ENCODE measurements at regions of chr3 and their contacts with region 1.

Region 1: DNA sequence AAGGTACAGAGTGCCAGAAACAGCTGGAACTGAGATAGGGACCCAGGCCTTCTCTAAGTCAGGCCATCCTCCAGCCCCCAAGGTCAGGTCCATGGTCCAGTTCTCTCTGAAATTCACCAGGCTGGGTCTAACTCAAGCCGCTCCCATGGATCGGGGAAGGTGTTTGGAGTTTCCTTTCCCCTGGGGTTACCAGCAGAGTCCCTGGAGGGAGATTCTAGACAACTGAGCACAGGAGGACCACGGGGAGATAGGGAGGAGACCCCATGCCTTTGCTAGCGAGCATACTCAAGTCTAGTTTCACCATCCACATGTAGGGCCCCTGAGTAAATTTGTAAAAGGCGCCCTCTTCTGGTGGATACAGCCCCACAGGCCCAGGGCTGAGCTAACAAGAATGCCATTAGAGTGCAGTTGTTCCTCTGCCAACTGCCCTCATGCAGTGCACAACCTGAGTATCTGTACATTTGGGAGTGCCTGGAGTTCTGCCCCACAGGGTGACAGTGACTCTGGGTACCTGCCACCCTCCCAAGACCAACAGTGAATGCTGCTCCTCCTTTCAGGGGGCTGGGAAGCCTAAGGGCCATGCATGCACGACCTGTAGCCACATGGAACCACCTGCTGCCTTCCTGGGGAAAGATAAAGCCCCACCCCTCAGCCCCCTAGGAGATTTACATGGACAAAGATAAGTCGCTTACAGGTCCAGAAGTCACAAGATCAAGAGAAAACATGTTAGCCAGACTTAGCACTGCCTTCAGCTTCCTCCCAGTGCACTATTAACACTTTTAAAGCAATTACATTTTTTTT is 89.0 kb downstream of the IQSEC1 start:
- DNase-seq: peak; percentile 80
- ATAC-seq: peak; percentile 89
- H3K4me3 Mint-ChIP-seq: no peak overlapping the region
- H3K27ac Mint-ChIP-seq: peak overlapping the region; percentile 60
- H3K4me1 Mint-ChIP-seq: peaks cover 37% of the 10 kb centered on the region
- H3K27me3 Mint-ChIP-seq: no peaks in the 10 kb centered on the region; the same call in 1 of the 2 replicates
- CTCF ChIP-seq: peak; percentile 62

Region 2: DNA sequence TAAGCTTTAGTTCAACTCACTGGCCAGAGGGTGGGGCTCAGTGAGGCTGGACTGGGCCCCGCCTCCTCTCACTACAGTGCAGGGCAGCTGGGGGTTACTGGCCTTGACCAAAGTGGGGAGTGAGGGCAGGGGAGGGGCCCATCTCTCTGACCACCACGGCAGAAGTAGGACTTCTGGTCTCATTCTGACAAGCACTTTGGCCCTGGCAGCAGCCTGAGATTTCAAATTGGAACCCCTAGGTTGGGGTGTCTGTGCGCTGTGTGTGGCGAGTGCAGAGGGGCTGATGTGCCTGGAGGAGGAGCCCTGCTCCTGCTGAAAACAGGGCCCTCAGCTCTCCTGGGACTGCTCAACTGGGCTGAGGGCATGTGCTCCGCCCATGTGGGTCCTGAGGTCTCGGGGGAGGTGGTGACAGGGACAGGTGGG is 82.6 kb before region 1 on chr3:
- CTCF ChIA-PET with region 1: interaction called, 10 read pairs
- POLR2A ChIA-PET with region 1: no interaction called
- DNase-seq: no peak
- ATAC-seq: peak; percentile 84
- H3K4me3 Mint-ChIP-seq: no peak overlapping the region
- H3K27ac Mint-ChIP-seq: no peak overlapping the region
- H3K4me1 Mint-ChIP-seq: peaks cover 10% of the 10 kb centered on the region
- H3K27me3 Mint-ChIP-seq: no peaks in the 10 kb centered on the region
- CTCF ChIP-seq: no peak

Region 3: DNA sequence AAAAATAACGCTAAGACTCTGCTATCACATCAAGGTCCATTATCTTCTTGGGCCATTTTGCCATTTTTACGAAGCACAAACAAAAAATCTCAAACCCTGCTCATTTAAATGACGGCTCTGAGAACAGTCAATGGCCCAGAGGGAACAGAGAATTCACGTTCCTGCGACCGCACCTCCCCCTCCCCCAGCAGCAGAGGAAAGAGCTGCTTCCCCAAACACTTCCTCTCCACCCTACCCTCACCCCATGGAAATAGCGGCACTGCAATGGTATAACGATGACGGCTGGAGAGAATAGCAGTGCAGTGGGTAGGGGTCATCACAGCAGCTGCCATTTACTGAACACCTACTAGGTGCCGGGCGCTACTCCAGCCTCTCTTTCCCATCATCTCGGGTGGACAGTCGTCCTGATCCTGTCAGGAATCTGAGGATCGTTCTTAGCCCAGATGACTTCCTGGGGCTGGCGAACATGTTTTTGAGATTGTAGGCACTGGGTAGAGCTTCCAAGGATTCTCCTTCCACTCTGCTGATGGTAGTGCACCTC is 24.3 kb before region 1 on chr3:
- CTCF ChIA-PET with region 1: interaction called, 14 read pairs
- POLR2A ChIA-PET with region 1: interaction called, 3 read pairs
- DNase-seq: no peak
- ATAC-seq: peak; percentile 66
- H3K4me3 Mint-ChIP-seq: no peak overlapping the region
- H3K27ac Mint-ChIP-seq: 0 out of 2 replicates have a peak overlapping the region, but pooled peaks have one; percentile 22
- H3K4me1 Mint-ChIP-seq: peaks cover 23% of the 10 kb centered on the region
- H3K27me3 Mint-ChIP-seq: no peaks in the 10 kb centered on the region
- CTCF ChIP-seq: no peak

Region 4: DNA sequence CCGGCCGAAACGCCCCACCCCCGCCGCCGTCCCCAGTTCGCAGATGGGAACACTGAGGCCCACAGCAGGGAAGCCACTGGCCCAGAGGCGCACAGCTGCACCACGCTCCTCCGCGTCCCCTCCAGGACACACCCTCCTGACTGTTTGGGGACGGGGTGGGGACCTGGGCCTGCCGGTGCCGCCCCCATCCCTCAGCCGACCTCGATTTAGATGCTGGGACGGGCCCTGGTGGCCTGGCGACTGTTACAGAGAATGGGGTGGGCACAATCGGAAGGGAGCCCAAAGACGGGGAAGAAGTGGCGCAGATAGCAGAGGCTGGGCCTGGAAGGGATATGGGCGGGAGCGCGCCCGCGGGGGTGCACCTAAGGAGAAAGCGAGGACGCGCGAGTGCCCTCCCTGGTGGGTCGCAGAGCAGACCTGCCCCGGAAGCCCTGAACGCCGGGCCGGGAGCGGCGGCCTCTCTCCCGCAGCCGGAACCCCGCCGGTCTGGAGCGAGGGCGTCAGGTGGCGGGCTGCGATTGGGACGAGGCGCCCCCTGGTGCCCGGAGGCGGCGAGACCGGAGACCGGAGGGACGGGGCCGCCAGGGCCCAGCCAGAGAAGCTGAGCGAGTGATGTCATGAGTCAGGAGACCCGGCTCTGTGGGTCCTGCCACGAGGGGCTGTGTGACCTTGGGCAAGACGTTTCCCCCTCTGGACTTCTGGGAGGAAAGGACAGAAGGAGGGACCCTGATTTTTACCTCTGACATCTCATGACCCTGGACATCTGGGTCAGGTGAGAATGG is 10.6 kb after region 1 on chr3:
- CTCF ChIA-PET with region 1: interaction called, 76 read pairs
- POLR2A ChIA-PET with region 1: no interaction called
- DNase-seq: peak; percentile 90
- ATAC-seq: peak; percentile 71
- H3K4me3 Mint-ChIP-seq: peak overlapping the region; percentile 79
- H3K27ac Mint-ChIP-seq: peak overlapping the region; percentile 79
- H3K4me1 Mint-ChIP-seq: peaks cover 14% of the 10 kb centered on the region
- H3K27me3 Mint-ChIP-seq: peaks cover 6% of the 10 kb centered on the region
- CTCF ChIP-seq: peak; percentile 83

Region 5: DNA sequence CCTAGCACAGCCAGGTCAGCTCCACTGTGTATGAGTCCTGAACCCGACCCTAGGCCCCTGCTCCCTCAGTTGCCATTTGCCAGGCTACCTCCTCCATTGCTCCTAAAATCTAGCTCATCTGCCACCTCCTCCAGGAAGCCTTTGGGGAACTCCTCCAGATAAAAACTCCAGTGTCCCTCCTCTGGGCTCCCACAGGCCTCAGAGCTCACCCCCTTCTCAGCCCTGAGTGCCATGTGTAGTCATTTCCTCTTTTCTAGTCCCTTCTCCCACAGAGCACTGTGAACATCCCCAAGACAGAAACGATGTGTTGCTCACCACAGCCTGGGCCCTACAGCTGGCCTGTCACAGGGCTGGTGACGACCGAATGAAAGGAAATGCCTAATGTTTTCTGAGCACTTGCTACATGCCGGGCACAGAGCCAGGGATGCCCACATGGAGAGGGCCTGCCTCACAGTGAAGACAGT is 28.0 kb after region 1 on chr3:
- CTCF ChIA-PET with region 1: interaction called, 15 read pairs
- POLR2A ChIA-PET with region 1: no interaction called
- DNase-seq: no peak
- ATAC-seq: no peak
- H3K4me3 Mint-ChIP-seq: no peak overlapping the region
- H3K27ac Mint-ChIP-seq: no peak overlapping the region; the same call in 1 of the 2 replicates
- H3K4me1 Mint-ChIP-seq: peaks cover 29% of the 10 kb centered on the region
- H3K27me3 Mint-ChIP-seq: no peaks in the 10 kb centered on the region
- CTCF ChIP-seq: no peak